Sigmoid colon (tissue), 7 donors: ENCODE measurements at regions of chr17 and their contacts with region 1.

Region 1: GRCh38 chr17:31842183-31843069 is 16.6 kb downstream of the COPRS start:
- DNase-seq: peak; percentile 86
- H3K4me3 ChIP-seq: peak overlapping the region in 3 of 4 donors; percentile 7 to 27 (median 19)
- H3K27ac ChIP-seq: peak overlapping the region; percentile 68 to 83 (median 72)
- H3K4me1 ChIP-seq: peaks cover 0 to 50% (median 41%) of the 10 kb centered on the region in 4 donors
- H3K27me3 ChIP-seq: no peaks in the 10 kb centered on the region
- CTCF ChIP-seq: peak; percentile 95 to 99 (median 98)
- EP300 ChIP-seq: no peak
- POLR2A ChIP-seq: no peak

Region 2: GRCh38 chr17:31549525-31550388 is 292.7 kb before region 1 on chr17:
- intact Hi-C with region 1: loop called (anchors 2 kb)
- DNase-seq: peak; percentile 96
- H3K4me3 ChIP-seq: peak overlapping the region; percentile 93 to 100 (median 94)
- H3K27ac ChIP-seq: peak overlapping the region; percentile 92 to 98 (median 93)
- H3K4me1 ChIP-seq: peaks cover 0 to 15% (median 6%) of the 10 kb centered on the region in 4 donors
- H3K27me3 ChIP-seq: no peaks in the 10 kb centered on the region
- CTCF ChIP-seq: no peak
- EP300 ChIP-seq: no peak
- POLR2A ChIP-seq: peak in 1 of 2 donors; percentile 45

Region 3: GRCh38 chr17:31696184-31696602 is 146.2 kb before region 1 on chr17:
- intact Hi-C with region 1: loop called (anchors 2 kb)
- DNase-seq: peak; percentile 96
- H3K4me3 ChIP-seq: no peak overlapping the region
- H3K27ac ChIP-seq: peak overlapping the region; percentile 81 to 86 (median 83)
- H3K4me1 ChIP-seq: peaks cover 0 to 84% (median 73%) of the 10 kb centered on the region in 4 donors
- H3K27me3 ChIP-seq: no peaks in the 10 kb centered on the region
- CTCF ChIP-seq: peak in 1 of 4 experiments; percentile 30
- EP300 ChIP-seq: peak in 3 of 4 donors; percentile 78 to 89 (median 80)
- POLR2A ChIP-seq: no peak

Region 4: DNA sequence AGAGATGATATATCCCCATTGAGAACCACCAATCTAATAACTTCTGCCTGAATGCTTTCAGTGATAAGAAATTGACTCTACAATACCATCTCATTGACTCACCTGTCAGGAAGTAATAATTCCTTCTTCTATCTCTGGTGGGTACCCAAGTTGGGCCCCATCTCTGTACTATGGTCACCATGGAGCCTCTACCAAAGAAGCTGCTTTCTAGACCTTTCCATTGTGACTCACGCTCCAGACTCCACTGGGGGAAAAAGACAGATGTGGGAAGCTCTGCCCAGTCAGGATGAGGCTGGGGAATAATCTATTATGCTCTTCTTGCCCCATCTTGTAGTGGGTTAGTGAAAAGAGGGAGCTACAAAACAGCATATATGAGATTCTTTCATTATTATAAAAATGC is 83.8 kb before region 1 on chr17:
- intact Hi-C with region 1: no loop called
- DNase-seq: no peak
- H3K4me3 ChIP-seq: no peak overlapping the region
- H3K27ac ChIP-seq: no peak overlapping the region
- H3K4me1 ChIP-seq: no peaks in the 10 kb centered on the region
- H3K27me3 ChIP-seq: no peaks in the 10 kb centered on the region
- CTCF ChIP-seq: no peak
- EP300 ChIP-seq: no peak
- POLR2A ChIP-seq: no peak